OCI-LY7 (cell line): ENCODE measurements at regions of chrX and their contacts with region 1.

Region 1: DNA sequence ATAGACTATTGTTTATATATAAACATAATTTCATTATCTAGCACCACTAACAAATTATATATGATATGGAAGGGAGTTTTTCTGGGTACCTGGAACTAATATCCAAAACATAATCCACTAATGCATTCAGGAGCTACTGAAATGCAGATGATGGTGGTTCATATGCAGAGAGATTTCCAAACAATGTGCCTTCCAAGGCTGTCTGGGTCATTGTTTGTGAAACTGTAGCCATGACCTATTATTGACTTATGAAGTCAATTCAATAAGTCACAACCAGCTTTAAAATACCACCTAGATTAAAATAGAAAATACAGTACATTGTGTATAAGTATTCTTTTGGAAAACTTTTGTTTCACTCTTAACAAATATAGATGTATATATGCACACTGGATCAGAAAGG is 237.0 kb upstream of the PRPS2 start:
- DNase-seq: no peak
- H3K4me3 ChIP-seq: no peak overlapping the region
- H3K27ac ChIP-seq: no peak overlapping the region
- H3K4me1 ChIP-seq: no peaks in the 10 kb centered on the region
- CTCF ChIP-seq: no peak

Region 2: DNA sequence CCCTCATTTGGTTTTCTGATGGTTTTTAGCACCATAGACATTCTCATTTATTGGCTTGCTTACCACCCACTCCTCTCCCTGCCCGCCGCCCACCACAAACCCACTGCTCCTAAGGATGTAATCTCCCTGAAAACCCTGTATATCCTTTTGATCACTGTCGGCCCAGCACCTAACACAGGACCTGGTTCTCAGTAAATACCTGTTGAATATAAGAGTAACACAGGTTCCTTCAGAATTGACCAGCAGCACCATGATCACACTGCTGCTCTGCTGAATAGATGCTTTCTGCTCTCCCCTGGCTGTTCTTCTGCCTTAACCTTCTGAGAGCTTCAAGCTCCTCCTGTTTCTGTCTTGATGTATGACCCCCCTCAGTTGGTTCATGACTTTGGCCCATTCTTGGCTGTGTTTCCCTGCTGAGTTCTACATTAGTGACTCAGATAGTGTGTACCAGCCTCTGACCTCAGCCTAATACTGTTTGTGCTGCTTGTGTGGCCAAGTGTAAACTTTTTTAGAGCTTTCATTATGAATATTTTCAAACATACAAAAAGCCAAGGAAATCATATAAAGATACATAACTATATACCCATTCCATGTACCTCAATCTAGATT is 150.6 kb before region 1 on chrX:
- CTCF ChIA-PET with region 1: no interaction called
- POLR2A ChIA-PET with region 1: no interaction called
- intact Hi-C with region 1: no loop called
- DNase-seq: no peak
- H3K4me3 ChIP-seq: no peak overlapping the region
- H3K27ac ChIP-seq: no peak overlapping the region
- H3K4me1 ChIP-seq: no peaks in the 10 kb centered on the region
- CTCF ChIP-seq: no peak

Region 3: DNA sequence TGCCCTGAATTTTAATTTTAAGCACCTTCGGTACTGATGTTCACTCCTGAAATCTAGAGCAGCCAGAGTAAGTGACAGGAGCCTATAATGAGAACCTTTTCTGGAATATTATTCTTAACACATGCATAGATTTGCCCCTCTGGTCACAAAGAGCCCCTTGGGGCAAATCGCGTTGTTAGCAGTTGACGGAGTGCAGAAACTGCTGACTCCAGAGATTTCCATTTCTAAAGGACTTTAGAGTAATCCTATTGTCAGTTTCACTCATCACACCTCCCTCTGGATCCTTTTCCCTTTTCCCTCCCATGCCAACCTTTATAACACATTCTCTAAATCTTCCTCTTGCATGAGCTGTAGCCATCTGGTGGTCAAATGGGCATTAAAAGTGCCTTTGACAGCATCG is 27.9 kb before region 1 on chrX:
- CTCF ChIA-PET with region 1: no interaction called
- POLR2A ChIA-PET with region 1: interaction called, 11 read pairs
- intact Hi-C with region 1: no loop called
- DNase-seq: no peak
- H3K4me3 ChIP-seq: no peak overlapping the region
- H3K27ac ChIP-seq: no peak overlapping the region
- H3K4me1 ChIP-seq: peaks cover 3% of the 10 kb centered on the region
- CTCF ChIP-seq: no peak

Region 4: DNA sequence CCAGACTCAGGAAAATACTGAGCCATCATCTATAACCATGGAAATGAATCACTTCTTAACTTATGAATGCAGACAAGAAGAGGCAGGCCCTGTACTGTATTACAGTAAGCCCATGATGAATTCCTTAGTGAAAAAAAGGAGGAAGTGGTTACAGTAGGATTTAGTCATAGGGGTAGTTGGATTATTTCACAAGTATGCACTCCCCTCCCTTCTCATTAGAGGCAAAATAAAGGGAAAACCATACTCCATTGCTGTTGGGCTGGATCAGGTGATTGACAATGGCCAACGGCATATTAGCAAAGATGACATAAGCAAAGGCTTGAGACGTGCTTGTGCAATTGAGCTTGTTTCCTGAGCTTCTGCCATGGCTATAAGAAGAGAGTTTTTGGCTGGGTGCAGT is 55.9 kb after region 1 on chrX:
- CTCF ChIA-PET with region 1: no interaction called
- POLR2A ChIA-PET with region 1: no interaction called
- intact Hi-C with region 1: no loop called
- DNase-seq: no peak
- H3K4me3 ChIP-seq: no peak overlapping the region
- H3K27ac ChIP-seq: no peak overlapping the region
- H3K4me1 ChIP-seq: no peaks in the 10 kb centered on the region
- CTCF ChIP-seq: no peak